ENCODE measurements at regions of chr19 and their contacts with region 1.

Region 1: GRCh38 chr19:3125900-3126524 is 9.8 kb upstream of the GNA15 start:
- DNase-seq: peak; percentile 53
- H3K4me3 ChIP-seq: no peak overlapping the region
- H3K27ac ChIP-seq: no peak overlapping the region
- H3K4me1 ChIP-seq: no peaks in the 10 kb centered on the region
- H3K27me3 ChIP-seq: no peaks in the 10 kb centered on the region
- CTCF ChIP-seq: peak; percentile 75 to 90
- POLR2A ChIP-seq: no peak

Region 2: GRCh38 chr19:2798733-2799132 is 327.3 kb before region 1 on chr19:
- CTCF ChIA-PET with region 1: no interaction called
- POLR2A ChIA-PET with region 1: no interaction called
- dilution Hi-C with region 1: no loop called
- intact Hi-C with region 1: no loop called
- DNase-seq: no peak
- H3K4me3 ChIP-seq: no peak overlapping the region
- H3K27ac ChIP-seq: no peak overlapping the region
- H3K4me1 ChIP-seq: no peaks in the 10 kb centered on the region
- H3K27me3 ChIP-seq: no peaks in the 10 kb centered on the region
- CTCF ChIP-seq: no peak
- POLR2A ChIP-seq: no peak

Region 3: GRCh38 chr19:3075895-3076431 is 50.0 kb before region 1 on chr19:
- CTCF ChIA-PET with region 1: interaction called, 12 read pairs
- POLR2A ChIA-PET with region 1: no interaction called
- dilution Hi-C with region 1: no loop called
- intact Hi-C with region 1: no loop called
- DNase-seq: peak; percentile 49
- H3K4me3 ChIP-seq: no peak overlapping the region
- H3K27ac ChIP-seq: no peak overlapping the region
- H3K4me1 ChIP-seq: no peaks in the 10 kb centered on the region
- H3K27me3 ChIP-seq: no peaks in the 10 kb centered on the region
- CTCF ChIP-seq: peak; percentile 92 to 97
- POLR2A ChIP-seq: no peak

Region 4: GRCh38 chr19:3108775-3109174 is 17.2 kb before region 1 on chr19:
- CTCF ChIA-PET with region 1: interaction called, 21 read pairs
- POLR2A ChIA-PET with region 1: no interaction called
- dilution Hi-C with region 1: no loop called
- intact Hi-C with region 1: no loop called
- DNase-seq: peak; percentile 62
- H3K4me3 ChIP-seq: no peak overlapping the region
- H3K27ac ChIP-seq: no peak overlapping the region
- H3K4me1 ChIP-seq: no peaks in the 10 kb centered on the region
- H3K27me3 ChIP-seq: no peaks in the 10 kb centered on the region
- CTCF ChIP-seq: peak; percentile 85 to 93
- POLR2A ChIP-seq: no peak

Region 5: GRCh38 chr19:3154957-3155736 is 29.1 kb after region 1 on chr19:
- CTCF ChIA-PET with region 1: interaction called, 177 read pairs
- POLR2A ChIA-PET with region 1: no interaction called
- dilution Hi-C with region 1: no loop called
- intact Hi-C with region 1: no loop called
- DNase-seq: peak; percentile 100
- H3K4me3 ChIP-seq: peak overlapping the region in 1 of 3 experiments; percentile 6
- H3K27ac ChIP-seq: peak overlapping the region; percentile 99
- H3K4me1 ChIP-seq: peaks cover 13% of the 10 kb centered on the region
- H3K27me3 ChIP-seq: no peaks in the 10 kb centered on the region
- CTCF ChIP-seq: no peak
- POLR2A ChIP-seq: peak; percentile 91

Region 6: DNA sequence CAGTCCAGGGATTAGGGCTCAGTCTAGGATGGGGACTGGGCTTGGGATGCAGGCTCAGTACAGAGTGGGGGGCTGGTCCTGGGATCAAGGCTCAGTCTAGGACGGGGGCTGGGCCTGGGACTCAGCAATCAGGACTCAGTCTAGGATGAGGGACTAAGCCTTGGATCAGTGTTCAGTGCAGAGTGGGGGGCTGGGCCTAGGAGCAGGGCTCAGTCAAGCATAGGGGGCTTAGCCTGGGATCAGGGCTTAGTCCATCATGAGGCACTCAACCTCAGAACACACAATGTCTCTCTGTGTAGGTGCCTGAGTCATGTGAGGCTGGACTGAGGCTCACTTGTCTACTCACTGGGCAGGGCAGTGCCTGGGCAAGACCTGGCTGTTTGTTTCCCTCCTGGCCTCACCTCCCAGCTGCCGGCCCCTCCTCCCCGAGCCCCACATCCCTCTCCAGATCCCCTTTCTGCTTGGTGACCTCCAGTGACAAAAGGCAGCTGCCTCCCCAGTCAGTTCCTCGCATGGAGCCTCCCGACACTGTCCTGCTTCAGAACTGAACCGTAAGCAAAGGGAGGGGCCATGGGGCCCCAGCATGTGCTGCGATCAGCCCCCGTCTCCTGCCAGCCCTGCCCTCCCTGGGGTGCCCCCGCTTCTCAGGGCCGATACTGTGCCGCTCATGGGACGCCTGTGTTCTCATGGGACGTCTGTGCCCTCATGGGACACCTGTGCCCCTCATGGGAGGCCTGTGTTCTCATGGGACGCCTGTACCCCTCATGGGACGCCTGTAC is 46.1 kb after region 1 on chr19:
- CTCF ChIA-PET with region 1: interaction called, 18 read pairs
- POLR2A ChIA-PET with region 1: no interaction called
- dilution Hi-C with region 1: no loop called
- intact Hi-C with region 1: no loop called
- DNase-seq: no peak
- H3K4me3 ChIP-seq: no peak overlapping the region
- H3K27ac ChIP-seq: no peak overlapping the region
- H3K4me1 ChIP-seq: no peaks in the 10 kb centered on the region
- H3K27me3 ChIP-seq: no peaks in the 10 kb centered on the region
- CTCF ChIP-seq: no peak
- POLR2A ChIP-seq: no peak

Region 7: DNA sequence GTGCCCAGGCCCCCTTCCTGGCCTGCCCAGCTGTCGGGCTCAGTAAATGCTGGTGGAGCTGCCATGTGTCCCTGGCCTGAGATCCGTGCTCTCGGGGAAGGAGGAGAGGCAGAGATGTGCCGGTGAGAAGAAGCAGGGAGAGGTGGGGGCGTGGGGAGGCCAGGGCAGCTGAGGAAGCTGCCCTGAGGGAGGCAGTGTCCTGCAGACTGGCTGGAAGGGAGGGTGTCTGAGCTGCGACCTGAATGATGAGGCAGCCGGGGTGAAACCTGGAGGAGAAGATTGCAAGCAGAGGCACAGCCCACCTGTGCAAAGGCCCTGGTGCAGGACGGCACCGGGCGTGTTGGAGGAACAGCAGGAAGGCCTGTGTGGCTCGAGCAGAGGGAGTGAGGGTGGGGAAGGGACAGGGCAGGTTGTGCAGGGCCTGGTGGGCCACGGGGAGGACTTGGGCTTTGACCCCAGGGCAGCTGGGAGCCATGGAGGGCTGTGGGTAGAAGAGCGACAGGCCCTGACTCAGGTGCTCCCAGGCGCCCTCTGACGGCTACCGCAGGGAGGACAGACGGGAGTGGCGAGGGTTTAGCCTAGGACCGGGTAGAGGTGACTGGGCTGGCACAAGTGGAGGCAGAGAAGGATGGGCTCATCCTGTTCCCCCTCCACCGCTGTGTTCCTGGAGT is 84.5 kb after region 1 on chr19:
- CTCF ChIA-PET with region 1: interaction called, 10 read pairs
- POLR2A ChIA-PET with region 1: no interaction called
- dilution Hi-C with region 1: no loop called
- intact Hi-C with region 1: no loop called
- DNase-seq: peak; percentile 40
- H3K4me3 ChIP-seq: no peak overlapping the region
- H3K27ac ChIP-seq: no peak overlapping the region
- H3K4me1 ChIP-seq: no peaks in the 10 kb centered on the region
- H3K27me3 ChIP-seq: no peaks in the 10 kb centered on the region
- CTCF ChIP-seq: peak; percentile 74 to 91
- POLR2A ChIP-seq: no peak